Activated CD4-positive, alpha-beta memory T cell treated with anti-CD3 and anti-CD28 coated beads, Interleukin-2, amount 10 ng/mL, durations not matched to agents 7 days and 5 days (primary cell): ENCODE measurements at regions of chr9 and their contacts with region 1.

Region 1: GRCh38 chr9:27333241-27334052 is 36.5 kb upstream of the EQTN start:
- DNase-seq: peak; percentile 42
- H3K4me3 Mint-ChIP-seq: no peak overlapping the region
- H3K27ac Mint-ChIP-seq: no peak overlapping the region
- H3K4me1 Mint-ChIP-seq: no peaks in the 10 kb centered on the region
- H3K27me3 Mint-ChIP-seq: peaks cover 11% of the 10 kb centered on the region

Region 2: GRCh38 chr9:27365707-27366376 is 32.4 kb after region 1 on chr9:
- CTCF ChIA-PET with region 1: interaction called, 15 read pairs
- POLR2A ChIA-PET with region 1: no interaction called
- DNase-seq: peak; percentile 50
- H3K4me3 Mint-ChIP-seq: no peak overlapping the region
- H3K27ac Mint-ChIP-seq: peak overlapping the region; percentile 40
- H3K4me1 Mint-ChIP-seq: peaks cover 25% of the 10 kb centered on the region
- H3K27me3 Mint-ChIP-seq: peaks cover 25% of the 10 kb centered on the region

Region 3: DNA sequence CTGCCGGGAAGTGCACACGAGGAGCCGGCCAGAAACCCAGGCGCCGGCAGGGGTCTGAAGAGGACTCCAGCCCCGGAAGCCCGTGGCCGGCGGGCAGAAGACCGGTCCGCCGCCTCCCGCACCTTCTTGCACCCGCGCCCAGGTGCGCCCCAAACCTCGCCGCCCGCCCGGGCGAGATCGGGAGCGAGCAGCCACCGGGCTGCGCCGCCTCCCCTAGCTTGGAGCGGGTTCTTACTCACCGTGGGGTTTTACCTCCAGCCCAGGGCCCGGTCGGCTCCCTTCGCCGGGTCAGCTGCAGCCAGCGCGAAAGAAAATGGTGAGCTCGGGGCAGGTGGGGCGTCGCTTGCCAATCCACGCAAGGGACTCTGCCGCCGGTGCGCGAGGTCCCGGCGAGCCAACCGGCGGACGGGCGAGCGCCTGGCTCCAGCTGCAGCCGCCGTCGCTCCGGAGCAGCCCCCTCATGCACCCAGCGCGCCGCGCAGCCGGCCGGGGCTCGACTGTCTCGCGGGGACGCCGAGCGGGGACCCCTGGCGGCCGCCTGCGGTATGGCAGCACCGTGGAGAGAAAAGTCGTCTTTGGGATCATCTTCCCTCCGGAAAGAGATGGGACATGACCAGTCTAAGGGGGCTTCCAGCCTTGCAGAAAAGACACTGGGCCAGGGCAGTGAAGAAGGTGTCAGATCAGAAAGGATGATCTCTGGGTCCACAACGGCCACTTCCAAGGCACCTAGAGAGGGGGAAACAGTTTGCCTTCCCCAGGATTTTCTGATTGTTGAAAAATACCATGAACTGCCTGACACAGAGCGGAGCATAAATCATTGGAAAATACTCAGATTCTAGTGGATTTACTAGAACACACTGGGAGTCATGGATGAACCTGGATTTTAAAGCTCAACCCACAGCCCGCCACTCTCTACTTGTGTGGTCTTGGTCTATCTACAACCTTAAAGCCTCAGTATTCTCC is 196.2 kb after region 1 on chr9 and contains the start of gene MOB3B:
- CTCF ChIA-PET with region 1: interaction called, 67 read pairs
- POLR2A ChIA-PET with region 1: no interaction called
- DNase-seq: peak; percentile 72
- H3K4me3 Mint-ChIP-seq: peak within 1 kb of the TSS; percentile 79
- H3K27ac Mint-ChIP-seq: no peak within 1 kb of the TSS
- H3K4me1 Mint-ChIP-seq: peaks cover 10% of the 10 kb centered on the region
- H3K27me3 Mint-ChIP-seq: peaks cover 39% of the 10 kb centered on the region
- total RNA-seq, gene MOB3B: 0.05 to 0.13 TPM

Region 4: DNA sequence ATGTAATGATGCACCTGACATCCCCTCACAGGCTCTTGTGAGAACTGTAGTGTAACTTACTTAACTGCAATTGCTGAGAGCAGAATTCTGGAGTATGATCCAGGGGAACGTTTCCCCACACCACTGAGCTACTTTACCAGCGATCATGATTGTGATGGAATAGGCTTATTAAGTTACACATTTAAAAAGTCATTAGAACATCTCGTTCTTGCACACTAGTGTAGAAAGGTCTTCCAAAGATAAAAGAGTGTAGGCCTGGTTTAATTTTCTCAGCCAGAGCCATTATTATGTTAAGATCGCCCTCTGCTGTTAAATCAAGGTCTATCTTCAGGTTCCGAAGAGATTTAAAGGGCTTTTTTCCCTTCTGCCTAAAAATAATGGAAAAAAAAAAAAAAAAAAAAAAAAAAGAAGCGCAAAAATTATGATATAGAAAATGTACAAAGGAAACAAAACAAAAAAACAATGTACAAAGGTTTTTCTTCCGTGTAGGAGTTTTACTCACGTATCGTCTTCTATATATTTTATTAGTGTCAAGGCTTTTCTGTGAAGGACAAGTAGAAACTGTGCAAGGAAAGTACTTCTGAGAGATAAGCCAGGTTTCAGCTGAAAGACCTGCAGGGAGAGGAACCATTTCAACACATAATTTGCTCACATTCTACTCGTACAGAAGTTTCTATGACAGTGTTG is 214.8 kb after region 1 on chr9:
- CTCF ChIA-PET with region 1: interaction called, 35 read pairs
- POLR2A ChIA-PET with region 1: no interaction called
- DNase-seq: no peak
- H3K4me3 Mint-ChIP-seq: no peak overlapping the region
- H3K27ac Mint-ChIP-seq: no peak overlapping the region
- H3K4me1 Mint-ChIP-seq: no peaks in the 10 kb centered on the region
- H3K27me3 Mint-ChIP-seq: no peaks in the 10 kb centered on the region